K562 (cell line): ENCODE measurements at regions of chr7 and their contacts with region 1.

Region 1: GRCh38 chr7:12951397-12951801 is 264.0 kb downstream of the ARL4A start:
- DNase-seq: peak in 2 of 4 experiments; percentile 51 to 57
- ATAC-seq: peak; percentile 84
- H3K4me3 ChIP-seq: no peak overlapping the region
- H3K27ac ChIP-seq: peak overlapping the region; percentile 64; the same call in 2 of the 3 replicates
- H3K4me1 ChIP-seq: peaks cover 0 to 10% of the 10 kb centered on the region in 2 experiments; a peak in 3 of 5 replicates
- H3K27me3 ChIP-seq: no peaks in the 10 kb centered on the region
- CTCF ChIP-seq: no peak
- EP300 ChIP-seq: peak; percentile 86
- POLR2A ChIP-seq: no peak
- RAD21 ChIP-seq: peak in 1 of 2 experiments; percentile 6; a peak in 1 of 4 replicates

Region 2: DNA sequence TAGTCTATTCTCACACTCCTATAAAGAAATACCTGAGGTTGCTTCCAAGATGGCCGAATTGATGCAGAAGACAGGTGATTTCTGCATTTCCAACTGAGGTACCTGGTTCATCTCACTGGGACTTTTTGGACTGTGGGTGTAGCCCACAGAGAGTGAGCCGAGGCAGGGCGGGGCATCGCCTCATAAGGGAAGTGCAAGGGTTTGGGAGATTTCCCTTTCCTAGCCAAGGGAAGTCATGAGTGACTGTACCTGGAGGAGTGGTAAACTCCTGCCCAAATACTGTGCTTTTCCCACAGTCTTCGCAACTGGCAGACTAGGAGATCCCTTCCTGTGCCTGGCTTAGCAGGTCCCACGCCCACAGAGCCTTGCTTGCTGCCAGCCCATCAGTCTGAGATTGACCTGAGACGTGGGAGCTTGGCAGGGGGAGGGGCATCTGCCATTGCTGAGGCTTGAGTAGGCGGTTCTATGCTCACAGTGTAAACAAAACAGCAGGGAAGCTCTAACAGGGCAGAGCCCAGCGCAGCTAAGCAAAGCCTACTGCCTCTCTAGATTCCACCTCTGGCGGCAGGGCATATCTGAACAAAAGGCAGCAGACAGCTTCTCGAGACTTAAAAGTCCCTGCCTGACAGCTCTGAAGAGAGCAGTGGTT is 111.8 kb before region 1 on chr7:
- CTCF ChIA-PET with region 1: no interaction called
- POLR2A ChIA-PET with region 1: no interaction called
- in situ Hi-C with region 1: no loop called
- intact Hi-C with region 1: loop called (anchors 5 kb)
- DNase-seq: no peak
- ATAC-seq: no peak; the same call in 2 of the 3 replicates
- H3K4me3 ChIP-seq: no peak overlapping the region
- H3K27ac ChIP-seq: no peak overlapping the region
- H3K4me1 ChIP-seq: peaks cover 0 to 2% of the 10 kb centered on the region in 2 experiments; a peak in 2 of 5 replicates
- H3K27me3 ChIP-seq: no peaks in the 10 kb centered on the region
- CTCF ChIP-seq: no peak
- EP300 ChIP-seq: no peak
- POLR2A ChIP-seq: no peak
- RAD21 ChIP-seq: no peak